ENCODE measurements at regions of chr2 and their contacts with region 1.

Region 1: DNA sequence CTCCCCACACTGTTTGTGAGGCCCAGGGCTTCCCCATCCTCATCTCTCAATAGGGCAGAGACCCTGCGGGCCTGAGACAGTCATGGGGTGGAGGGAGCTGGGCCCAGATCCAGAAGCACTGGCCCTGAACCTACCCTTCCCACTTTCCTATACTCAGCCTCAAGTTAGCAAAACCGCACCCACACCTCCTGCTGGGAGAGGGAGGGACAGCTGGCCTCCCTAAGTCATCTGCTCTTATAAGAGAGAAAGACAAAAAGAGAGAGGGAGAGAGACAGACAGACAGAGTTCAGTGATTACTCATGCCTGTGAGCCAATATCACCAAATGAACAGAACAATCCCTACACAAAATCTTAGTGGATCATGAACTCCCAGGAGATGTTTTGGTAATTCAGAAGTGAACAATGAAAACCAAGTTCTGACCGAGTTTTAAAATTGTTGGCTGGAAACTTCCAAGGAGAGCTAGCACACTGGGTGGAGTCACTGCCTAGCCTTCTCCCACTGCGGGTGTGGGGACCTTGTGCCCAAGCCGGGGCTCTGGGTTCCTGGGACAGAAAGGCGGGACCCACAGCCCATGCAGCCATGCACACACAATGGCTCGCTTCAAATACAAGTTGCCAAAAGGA is 130.5 kb downstream of the PXDN start:
- DNase-seq: no peak
- H3K4me3 ChIP-seq: no peak overlapping the region
- H3K27ac ChIP-seq: no peak overlapping the region
- H3K4me1 ChIP-seq: no peaks in the 10 kb centered on the region
- H3K27me3 ChIP-seq: no peaks in the 10 kb centered on the region
- CTCF ChIP-seq: no peak
- EP300 ChIP-seq: no peak
- POLR2A ChIP-seq: no peak

Region 2: GRCh38 chr2:1572638-1573037 is 41.2 kb before region 1 on chr2:
- intact Hi-C with region 1: loop called in 1 of 4 experiments (anchors 2 kb)
- DNase-seq: peak in 1 of 5 donors; percentile 6
- H3K4me3 ChIP-seq: no peak overlapping the region
- H3K27ac ChIP-seq: no peak overlapping the region
- H3K4me1 ChIP-seq: no peaks in the 10 kb centered on the region
- H3K27me3 ChIP-seq: no peaks in the 10 kb centered on the region
- CTCF ChIP-seq: no peak
- EP300 ChIP-seq: no peak
- POLR2A ChIP-seq: no peak

Region 3: DNA sequence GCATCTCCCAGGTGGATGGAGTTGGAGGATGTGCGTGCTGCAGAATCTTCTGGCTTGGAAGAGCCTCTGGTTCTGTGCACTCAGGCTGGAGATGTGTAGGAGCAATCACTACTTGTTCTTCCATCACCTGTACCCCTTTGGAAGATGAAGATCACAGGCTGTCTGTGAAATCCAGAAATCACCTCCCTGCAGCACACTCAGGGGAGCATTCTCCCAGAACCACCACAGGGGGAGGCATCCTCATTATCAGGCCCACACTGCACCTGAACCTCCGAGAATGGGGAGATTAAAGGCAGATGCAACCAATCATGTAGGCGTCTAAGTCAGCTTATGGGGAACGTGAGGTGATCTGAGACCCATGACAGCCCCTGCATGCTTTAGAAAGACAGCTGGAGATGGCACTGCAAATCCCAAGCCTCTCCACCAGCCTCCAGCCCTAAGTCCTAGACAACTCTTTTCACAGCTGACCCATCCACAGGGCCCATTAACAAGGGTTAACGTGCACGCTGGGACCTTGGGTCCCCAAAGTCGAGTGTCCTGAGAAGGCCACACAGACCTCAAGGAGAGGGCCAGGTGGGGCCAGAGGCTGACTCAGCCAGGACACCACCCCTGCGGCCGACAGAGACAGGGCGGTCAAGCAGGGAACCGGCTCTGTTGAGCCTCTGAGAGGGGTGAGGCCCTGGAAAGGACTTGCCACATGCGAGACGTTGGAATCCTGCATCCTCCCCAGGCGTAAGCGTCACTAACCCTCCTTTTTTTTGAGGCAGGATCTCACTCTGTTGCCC is 1448.8 kb after region 1 on chr2:
- intact Hi-C with region 1: loop called in 1 of 4 experiments (anchors 5 kb)
- DNase-seq: no peak
- H3K4me3 ChIP-seq: no peak overlapping the region
- H3K27ac ChIP-seq: no peak overlapping the region
- H3K4me1 ChIP-seq: no peaks in the 10 kb centered on the region
- H3K27me3 ChIP-seq: no peaks in the 10 kb centered on the region
- CTCF ChIP-seq: no peak
- EP300 ChIP-seq: no peak
- POLR2A ChIP-seq: no peak

Measured in ovary (tissue), 10 donors.